Calu3 (cell line): ENCODE measurements at regions of chr1 and their contacts with region 1.

Region 1: DNA sequence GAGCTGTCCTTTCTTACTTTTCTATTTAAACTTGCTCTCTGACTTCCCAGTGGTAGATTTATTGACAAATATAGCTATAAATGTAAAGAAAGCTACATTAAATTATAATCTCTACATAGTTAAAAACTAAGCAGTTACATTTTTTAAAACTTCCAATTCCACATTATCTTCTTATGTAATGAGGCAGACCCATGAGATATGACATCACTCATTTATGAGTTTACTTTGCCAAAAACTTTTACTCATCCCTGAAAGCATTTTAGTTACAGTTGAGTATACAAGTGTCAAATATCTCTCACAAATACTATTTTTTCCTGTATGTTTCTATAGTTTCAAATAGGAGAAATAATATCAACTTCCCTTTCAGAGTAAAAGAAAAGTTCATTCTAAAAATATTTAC is 3.8 kb downstream of the NMNAT2 start:
- DNase-seq: no peak
- H3K4me3 Mint-ChIP-seq: no peak overlapping the region
- H3K27ac Mint-ChIP-seq: no peak overlapping the region
- H3K4me1 Mint-ChIP-seq: peaks cover 29% of the 10 kb centered on the region
- H3K27me3 Mint-ChIP-seq: peaks cover 41% of the 10 kb centered on the region
- CTCF ChIP-seq: no peak

Region 2: DNA sequence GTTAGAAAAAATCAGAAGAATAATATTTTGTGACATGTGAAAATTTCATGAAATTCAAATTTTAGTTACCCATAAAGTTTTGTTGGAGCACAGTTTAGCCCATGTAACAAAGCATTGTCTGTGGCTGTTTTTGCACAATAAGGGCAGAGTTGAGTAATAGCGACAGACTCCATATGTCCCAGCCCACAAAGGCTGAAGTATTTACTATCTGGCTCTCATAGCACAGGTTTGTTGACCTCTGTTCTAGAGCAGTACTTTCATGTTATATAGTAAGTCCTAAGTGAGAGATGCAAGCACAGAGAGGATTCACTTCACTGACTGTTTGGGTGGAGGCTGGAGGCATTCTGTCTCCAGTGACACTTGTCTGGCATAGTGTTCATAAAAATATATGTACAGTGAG is 384.3 kb before region 1 on chr1:
- CTCF ChIA-PET with region 1: no interaction called
- intact Hi-C with region 1: no loop called
- DNase-seq: no peak
- H3K4me3 Mint-ChIP-seq: peak overlapping the region; percentile 94
- H3K27ac Mint-ChIP-seq: no peak overlapping the region
- H3K4me1 Mint-ChIP-seq: peaks cover 72% of the 10 kb centered on the region
- H3K27me3 Mint-ChIP-seq: no peaks in the 10 kb centered on the region
- CTCF ChIP-seq: no peak

Region 3: GRCh38 chr1:183533617-183534174 is 119.3 kb after region 1 on chr1:
- CTCF ChIA-PET with region 1: no interaction called
- intact Hi-C with region 1: no loop called
- DNase-seq: no peak
- H3K4me3 Mint-ChIP-seq: no peak overlapping the region
- H3K27ac Mint-ChIP-seq: no peak overlapping the region
- H3K4me1 Mint-ChIP-seq: no peaks in the 10 kb centered on the region
- H3K27me3 Mint-ChIP-seq: no peaks in the 10 kb centered on the region
- CTCF ChIP-seq: no peak

Region 4: DNA sequence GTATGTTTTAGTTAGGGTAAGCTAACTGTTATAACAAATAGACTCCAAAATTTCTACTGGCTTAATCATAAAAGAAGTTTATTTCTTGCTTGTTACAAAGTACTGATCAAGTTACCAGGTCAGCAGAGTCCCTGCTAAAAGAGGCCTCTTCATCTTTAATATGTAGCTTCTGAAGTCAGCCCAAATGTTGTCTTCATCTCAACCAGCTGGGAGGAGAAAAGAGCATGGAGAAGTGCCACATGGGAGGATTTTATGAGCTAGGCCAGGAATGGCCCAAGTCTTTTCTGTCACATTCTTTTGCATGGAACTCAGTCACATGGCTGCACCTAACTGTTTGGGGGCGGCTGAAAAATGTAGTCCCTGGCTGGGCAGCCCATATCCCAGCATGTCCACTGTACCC is 301.9 kb after region 1 on chr1:
- CTCF ChIA-PET with region 1: interaction called, 10 read pairs
- intact Hi-C with region 1: no loop called
- DNase-seq: no peak
- H3K4me3 Mint-ChIP-seq: no peak overlapping the region
- H3K27ac Mint-ChIP-seq: no peak overlapping the region
- H3K4me1 Mint-ChIP-seq: peaks cover 13% of the 10 kb centered on the region
- H3K27me3 Mint-ChIP-seq: no peaks in the 10 kb centered on the region
- CTCF ChIP-seq: no peak